Activated naive CD4-positive, alpha-beta T cell treated with anti-CD3 and anti-CD28 coated beads for 36 hours (primary cell): ENCODE measurements at regions of chr11 and their contacts with region 1.

Region 1: DNA sequence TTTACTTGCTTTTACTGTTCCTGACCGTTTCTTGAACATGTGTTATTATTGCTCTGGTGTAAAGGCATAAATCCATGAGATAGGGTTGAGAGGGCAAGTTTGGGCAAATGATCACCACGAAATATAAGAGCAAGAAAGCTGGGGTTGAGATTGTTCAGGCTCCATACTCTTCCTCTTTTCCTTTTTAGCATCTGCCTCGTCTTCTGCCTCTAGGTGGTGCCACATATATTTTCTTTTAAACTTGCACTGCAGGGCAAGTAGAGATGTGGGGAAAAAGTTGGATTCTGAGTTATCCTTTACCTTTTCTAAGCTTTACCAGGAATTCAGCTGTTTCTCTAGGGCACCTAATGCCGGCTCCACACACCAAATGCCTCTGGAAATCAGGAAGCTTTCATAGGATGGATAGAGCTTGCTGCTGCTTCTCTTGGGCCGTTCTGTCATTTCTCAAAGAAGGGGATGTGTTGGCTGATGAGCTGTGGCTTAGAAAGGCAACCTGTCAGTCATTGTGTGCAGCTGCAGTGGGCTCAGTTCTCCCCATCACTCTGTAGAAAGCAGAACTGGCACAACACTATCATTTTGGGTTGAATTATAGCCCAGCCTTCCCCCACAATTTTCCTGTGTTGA is 98.2 kb downstream of the LDLRAD3 start:
- DNase-seq: no peak
- H3K4me3 Mint-ChIP-seq: no peak overlapping the region
- H3K27ac Mint-ChIP-seq: no peak overlapping the region
- H3K4me1 Mint-ChIP-seq: no peaks in the 10 kb centered on the region
- H3K27me3 Mint-ChIP-seq: peaks cover 15% of the 10 kb centered on the region

Region 2: GRCh38 chr11:35525501-35526175 is 516.5 kb before region 1 on chr11 and contains the start of gene PAMR1:
- CTCF ChIA-PET with region 1: no interaction called
- intact Hi-C with region 1: no loop called
- DNase-seq: peak; percentile 54
- H3K4me3 Mint-ChIP-seq: no peak within 1 kb of the TSS
- H3K27ac Mint-ChIP-seq: no peak within 1 kb of the TSS
- H3K4me1 Mint-ChIP-seq: peaks cover 12% of the 10 kb centered on the region
- H3K27me3 Mint-ChIP-seq: peaks cover 58% of the 10 kb centered on the region
- total RNA-seq, gene PAMR1: not detected

Region 3: DNA sequence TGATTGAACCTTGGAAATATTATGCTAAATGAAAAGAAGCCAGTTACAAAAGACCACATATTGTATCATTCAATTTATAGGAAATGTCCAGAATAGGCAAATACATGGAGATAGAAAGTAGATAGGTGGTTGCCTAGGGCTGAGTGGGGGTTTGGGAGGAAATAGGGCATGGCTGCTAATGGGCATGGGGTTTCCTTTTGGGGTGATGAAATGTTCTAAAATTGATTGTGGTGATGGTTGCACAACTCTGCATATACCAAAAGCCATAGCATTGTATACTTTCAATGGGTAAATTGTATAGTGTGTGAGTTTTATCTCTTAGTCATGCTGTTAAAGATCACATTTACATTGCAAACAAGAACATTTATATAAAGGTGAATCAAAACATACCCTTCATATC is 49.6 kb before region 1 on chr11:
- CTCF ChIA-PET with region 1: no interaction called
- intact Hi-C with region 1: no loop called
- DNase-seq: no peak
- H3K4me3 Mint-ChIP-seq: no peak overlapping the region
- H3K27ac Mint-ChIP-seq: no peak overlapping the region
- H3K4me1 Mint-ChIP-seq: no peaks in the 10 kb centered on the region
- H3K27me3 Mint-ChIP-seq: peaks cover 15% of the 10 kb centered on the region

Region 4: GRCh38 chr11:36149538-36150242 is 107.6 kb after region 1 on chr11:
- CTCF ChIA-PET with region 1: no interaction called
- intact Hi-C with region 1: loop called (anchors 1 kb)
- DNase-seq: peak; percentile 68
- H3K4me3 Mint-ChIP-seq: no peak overlapping the region
- H3K27ac Mint-ChIP-seq: no peak overlapping the region
- H3K4me1 Mint-ChIP-seq: peaks cover 13% of the 10 kb centered on the region
- H3K27me3 Mint-ChIP-seq: peaks cover 20% of the 10 kb centered on the region

Region 5: DNA sequence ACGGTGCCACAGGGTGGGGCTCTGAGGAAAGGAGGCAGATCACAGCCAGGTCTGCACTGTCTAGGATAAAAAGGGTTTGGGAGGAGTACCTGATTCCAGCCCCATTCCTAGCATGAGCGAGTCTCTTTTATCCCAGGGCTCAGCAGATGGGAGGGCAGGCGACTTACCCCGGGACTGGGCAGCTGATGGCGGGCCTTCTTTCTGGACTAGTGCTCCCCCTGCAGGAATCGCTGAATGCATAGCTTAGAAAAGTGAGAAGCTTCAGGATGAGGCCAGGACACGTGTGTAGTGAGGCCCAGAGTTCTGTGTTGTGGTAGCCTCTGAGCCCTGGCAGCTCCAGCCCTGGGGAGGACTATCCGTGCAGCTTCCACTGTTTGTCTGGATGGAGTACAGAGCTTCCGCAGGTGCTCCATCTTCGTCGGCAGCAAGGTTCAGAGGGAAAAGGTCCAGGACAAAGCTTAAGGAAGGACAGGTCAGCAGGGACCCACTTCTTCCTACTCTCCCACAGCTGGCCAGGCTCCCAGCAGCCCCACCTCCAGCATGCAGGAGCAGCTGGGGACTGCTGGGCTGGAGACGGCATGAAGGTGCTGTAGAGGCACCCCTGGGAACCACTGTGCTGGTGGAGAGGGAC is 216.7 kb after region 1 on chr11:
- CTCF ChIA-PET with region 1: interaction called, 18 read pairs
- intact Hi-C with region 1: loop called (anchors 2 kb)
- DNase-seq: peak; percentile 51
- H3K4me3 Mint-ChIP-seq: no peak overlapping the region
- H3K27ac Mint-ChIP-seq: no peak overlapping the region
- H3K4me1 Mint-ChIP-seq: no peaks in the 10 kb centered on the region
- H3K27me3 Mint-ChIP-seq: peaks cover 27% of the 10 kb centered on the region

Region 6: DNA sequence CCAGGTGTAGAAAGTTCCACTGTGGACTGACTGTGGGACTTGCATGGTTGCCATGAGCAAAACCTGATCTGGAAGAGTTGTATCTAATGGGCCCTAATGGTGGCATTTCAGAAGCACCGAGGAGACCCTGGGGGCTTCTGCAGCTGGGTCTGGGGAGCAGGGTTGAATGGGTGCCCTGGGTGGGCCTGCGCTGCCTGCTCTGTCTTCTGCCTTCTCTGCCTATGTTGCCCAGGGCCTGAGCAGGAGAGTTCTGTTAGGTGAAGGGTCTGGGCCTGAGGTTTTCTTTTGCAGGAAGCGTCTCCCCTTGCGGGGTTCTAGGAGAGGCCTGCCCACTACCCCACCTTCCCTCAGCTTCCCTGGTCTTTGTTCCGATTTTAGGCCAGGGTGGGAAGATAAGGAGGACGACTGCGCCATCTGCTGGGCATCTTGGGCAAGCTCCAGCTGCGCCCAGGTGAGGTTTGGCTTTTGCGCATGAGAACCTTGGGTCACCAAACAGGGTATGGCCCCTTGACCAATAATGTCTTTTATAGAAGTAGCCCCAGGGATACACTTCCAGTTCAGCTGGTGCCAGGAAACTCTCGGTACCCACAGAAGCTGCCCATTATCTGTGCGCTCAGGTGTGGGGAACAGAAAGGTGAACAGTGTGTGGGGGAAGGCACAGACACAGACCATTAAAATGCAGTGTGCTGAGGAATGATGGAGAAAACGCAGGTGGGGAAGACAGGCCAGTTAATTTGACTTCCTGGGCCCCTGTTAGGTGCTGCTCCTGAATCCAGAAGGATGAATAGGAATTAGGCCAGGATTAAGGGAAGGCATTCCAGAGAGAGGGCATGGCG is 223.9 kb after region 1 on chr11:
- CTCF ChIA-PET with region 1: interaction called, 9 read pairs
- intact Hi-C with region 1: loop called (anchors 2 kb)
- DNase-seq: peak; percentile 74
- H3K4me3 Mint-ChIP-seq: no peak overlapping the region
- H3K27ac Mint-ChIP-seq: no peak overlapping the region
- H3K4me1 Mint-ChIP-seq: no peaks in the 10 kb centered on the region
- H3K27me3 Mint-ChIP-seq: peaks cover 1% of the 10 kb centered on the region